ENCODE measurements at regions of chr14 and their contacts with region 1.

Region 1: DNA sequence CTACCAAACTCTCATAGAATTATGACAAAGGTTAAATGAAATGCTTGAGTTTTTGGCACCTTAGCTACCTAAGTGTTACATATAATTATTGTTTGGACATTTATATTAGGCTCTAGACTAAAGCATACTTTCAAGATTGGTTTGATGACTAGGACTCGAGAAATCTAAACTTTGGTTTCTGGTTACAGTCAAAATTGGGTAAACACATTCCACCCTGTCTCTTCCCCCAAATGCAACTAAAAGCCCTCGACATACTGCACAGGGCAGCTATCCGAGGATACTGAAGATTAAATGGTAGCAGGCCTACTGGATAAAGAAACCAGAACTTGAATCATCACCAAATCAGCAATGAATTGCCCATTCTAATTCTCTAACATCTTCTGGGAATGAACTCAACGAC is 369.1 kb downstream of the PRKD1 start:
- DNase-seq: no peak
- ATAC-seq: no peak
- H3K4me3 ChIP-seq: no peak overlapping the region
- H3K4me1 ChIP-seq: no peaks in the 10 kb centered on the region
- CTCF ChIP-seq: no peak

Region 2: GRCh38 chr14:29710015-29710565 is 151.6 kb after region 1 on chr14:
- intact Hi-C with region 1: no loop called
- DNase-seq: no peak
- ATAC-seq: no peak
- H3K4me3 ChIP-seq: no peak overlapping the region
- H3K4me1 ChIP-seq: no peaks in the 10 kb centered on the region
- CTCF ChIP-seq: no peak

Region 3: DNA sequence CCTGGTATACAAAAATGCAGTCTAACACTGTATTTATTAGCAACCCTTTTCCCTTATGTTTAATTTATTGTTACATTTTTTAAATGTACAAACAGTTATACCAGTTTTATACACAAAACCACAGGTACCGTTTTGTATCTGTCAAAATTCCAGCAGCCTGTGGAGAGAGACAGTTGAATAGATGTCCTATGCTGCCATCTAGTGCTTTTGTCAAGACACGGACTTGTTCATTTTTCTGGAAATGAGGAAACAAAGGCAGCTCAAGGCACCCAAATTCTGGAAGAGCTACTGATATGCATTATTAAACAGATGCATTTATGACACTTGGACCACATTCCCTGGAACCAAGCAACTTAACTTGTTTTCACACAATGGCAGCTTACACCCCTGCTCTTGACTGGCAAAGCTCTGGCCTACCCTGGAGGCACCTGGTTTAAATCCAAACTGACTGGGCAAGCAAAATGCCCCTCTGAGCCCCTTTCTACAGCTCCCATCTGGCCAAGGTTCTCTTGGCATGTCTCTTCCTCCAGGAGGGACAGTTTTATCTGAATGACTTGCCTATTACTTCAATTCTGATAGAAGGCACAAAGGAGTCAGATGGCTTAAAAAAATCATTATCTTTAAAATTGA is 656.1 kb after region 1 on chr14:
- intact Hi-C with region 1: loop called in 1 of 2 experiments (anchors 10 kb)
- DNase-seq: peak in 1 of 3 donors; percentile 16
- ATAC-seq: no peak
- H3K4me3 ChIP-seq: no peak overlapping the region
- H3K4me1 ChIP-seq: no peaks in the 10 kb centered on the region
- CTCF ChIP-seq: no peak

Measured in mucosa of descending colon (tissue), 3 donors.